ENCODE measurements at regions of chr22 and their contacts with region 1.

Region 1: DNA sequence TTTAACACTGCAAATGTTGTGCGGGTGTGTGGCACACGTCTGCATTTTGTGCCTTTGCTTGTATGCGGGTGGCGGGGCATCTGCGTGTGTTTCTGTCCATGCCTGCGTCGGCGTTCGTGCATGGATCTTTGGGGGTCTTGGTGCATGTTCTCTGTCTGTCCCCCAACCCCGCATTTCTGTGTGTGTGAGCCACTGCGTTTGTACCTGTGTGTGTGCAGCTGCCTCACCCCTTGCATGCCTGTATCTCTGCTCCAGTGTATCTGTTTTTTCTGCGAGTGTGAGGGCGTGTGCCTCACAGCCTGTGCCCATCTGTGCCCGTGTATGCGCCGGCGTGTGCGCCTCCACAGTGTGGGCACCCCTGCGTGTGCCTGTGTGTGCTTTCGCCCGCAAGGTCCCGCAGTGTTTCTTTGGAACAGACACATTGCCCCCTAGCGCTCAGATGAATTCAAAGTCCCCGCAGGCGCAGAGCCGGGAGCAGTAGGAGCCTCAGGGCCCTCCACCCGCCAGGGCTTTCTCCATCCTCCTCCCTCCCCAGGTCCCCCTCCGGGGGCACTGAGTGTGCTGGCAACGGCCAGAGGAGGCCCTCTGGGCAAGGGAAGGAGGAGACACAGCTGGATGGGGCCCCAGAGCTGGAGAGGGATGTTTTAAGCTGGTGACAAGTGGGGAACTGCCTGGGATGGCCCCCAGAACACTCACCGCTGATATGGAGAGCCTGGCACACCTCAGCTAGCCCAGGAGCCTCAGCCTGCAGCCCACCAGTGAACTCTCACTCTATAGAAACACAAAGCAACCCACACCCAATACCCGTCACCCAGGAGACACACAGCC is 3.1 kb upstream of the MN1 start:
- DNase-seq: peak; percentile 74 to 94 (median 86)

Region 2: DNA sequence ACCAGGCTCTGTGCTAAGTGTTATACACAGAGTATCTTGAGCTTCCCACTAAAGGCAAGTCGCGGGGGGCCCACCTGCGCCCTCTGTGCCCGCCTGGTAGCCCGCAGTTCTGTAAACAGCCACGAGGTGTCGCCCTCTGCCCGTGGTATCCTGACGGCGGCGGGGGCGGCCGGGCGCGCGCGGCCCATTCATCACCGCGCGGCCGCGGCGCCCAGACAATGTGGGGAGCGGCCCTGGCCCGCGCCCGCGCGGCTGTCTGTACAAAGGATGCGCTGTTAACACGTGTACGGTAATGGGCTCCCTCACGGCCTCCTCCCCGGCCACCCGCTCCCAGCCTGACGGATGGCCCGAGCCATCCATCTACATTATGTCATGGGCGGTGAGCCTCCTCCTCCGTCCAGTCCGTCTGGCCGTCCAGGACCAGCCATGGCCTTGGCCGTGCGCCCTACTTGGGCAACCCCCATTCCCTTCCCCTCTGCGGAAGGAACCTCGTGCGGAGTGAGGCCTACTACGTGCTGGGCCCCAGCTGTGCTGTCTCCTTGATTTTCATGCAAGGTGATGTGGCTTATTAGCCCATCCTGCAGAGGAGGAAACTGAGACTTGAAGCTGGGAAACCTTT is 1047.9 kb before region 1 on chr22:
- intact Hi-C with region 1: loop called (anchors 10 kb)
- DNase-seq: peak; percentile 40 to 88 (median 74)

Region 3: GRCh38 chr22:27331526-27332281 is 473.0 kb before region 1 on chr22:
- intact Hi-C with region 1: no loop called
- DNase-seq: peak; percentile 34 to 89 (median 62)

Region 4: GRCh38 chr22:27718186-27719032 is 86.3 kb before region 1 on chr22:
- intact Hi-C with region 1: loop called (anchors 10 kb)
- DNase-seq: peak; percentile 41 to 94 (median 74)

Measured in head of caudate nucleus (tissue), 42 donors.